ENCODE measurements at regions of chr2 and their contacts with region 1.

Region 1: DNA sequence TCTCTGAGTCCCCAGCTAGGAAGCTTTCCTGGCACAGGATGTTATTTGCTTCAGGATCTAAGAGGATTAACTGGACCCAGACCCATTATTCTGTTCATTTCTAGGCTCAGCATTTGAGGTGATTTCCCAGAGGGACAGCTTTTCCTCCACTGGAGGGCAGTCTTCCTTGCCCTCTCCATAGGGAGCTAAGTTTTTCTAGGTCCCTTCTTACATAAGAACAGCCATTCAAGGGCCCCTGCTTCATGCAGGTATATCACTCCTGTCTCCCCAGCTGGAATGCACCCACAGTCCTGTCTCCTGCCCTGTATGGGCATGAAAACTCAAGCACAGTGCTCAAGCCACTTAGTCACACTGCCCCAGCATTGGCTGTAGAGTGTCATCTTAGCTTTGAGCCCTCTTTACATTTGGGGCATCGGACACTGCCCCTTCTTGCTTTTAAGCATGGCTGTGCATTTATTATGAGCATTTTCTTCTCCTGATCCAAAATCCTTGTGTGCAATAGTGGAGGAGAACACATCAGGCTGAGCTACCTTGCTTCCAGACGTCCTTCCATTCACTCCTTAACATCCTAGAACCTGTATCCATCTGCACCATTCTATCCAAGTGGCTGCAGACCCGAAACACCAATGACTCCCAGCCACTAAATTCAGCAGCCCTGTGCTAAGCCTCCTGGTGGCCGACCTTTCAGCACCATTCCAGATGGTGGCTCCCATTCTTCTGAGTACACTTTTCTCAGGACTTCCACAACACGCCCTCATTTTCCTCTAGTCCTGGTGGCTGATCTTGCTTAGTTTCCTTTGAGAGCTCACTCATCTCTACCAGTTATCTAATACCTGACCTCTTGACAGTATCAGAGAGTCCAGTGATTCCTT is 80.0 kb downstream of the COPS8 start:
- DNase-seq: no peak
- ATAC-seq: no peak

Region 2: GRCh38 chr2:236968101-236968879 is 197.4 kb before region 1 on chr2:
- intact Hi-C with region 1: no loop called
- DNase-seq: no peak
- ATAC-seq: no peak

Region 3: DNA sequence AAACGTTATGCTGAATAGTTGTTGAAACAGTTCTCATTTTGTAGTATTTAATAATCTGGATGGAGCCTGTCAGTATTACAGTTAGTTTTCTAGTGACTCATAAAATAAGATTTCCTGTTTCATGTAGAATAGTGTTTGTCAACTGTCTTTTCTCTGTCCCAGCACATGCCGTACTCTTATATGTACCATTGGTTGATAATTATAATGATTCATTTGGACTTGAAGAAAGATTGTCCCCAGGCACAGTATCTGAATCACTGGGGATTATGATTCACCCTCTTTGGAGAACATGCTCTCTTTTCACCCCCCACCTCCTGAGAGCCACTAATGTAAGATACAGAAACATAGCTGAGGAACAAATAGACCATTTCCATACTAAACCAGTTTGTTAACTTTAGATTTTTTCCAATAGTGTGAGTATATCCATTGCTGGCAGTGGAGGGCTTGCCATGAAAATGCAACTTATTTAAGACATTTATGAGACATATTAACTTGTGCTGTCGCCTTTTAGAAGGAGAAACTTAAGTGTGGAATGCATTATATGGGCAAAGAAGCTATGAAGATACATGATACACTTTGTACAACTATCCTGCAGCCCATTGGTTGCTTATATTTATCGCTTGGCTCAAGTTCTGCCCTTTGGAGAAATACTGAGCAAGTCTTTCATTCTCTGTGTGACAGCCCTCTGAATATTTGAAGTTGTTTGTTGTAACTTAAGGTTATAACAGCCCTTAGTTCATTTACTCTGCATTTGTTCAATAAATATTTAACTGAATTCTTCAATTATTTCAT is 67.5 kb before region 1 on chr2:
- intact Hi-C with region 1: no loop called
- DNase-seq: no peak
- ATAC-seq: no peak

Region 4: GRCh38 chr2:237322564-237322963 is 156.9 kb after region 1 on chr2:
- intact Hi-C with region 1: loop called (anchors 2 kb)
- DNase-seq: no peak
- ATAC-seq: no peak

Region 5: GRCh38 chr2:237354892-237355291 is 189.3 kb after region 1 on chr2:
- intact Hi-C with region 1: no loop called
- DNase-seq: no peak
- ATAC-seq: peak; percentile 19

Region 6: DNA sequence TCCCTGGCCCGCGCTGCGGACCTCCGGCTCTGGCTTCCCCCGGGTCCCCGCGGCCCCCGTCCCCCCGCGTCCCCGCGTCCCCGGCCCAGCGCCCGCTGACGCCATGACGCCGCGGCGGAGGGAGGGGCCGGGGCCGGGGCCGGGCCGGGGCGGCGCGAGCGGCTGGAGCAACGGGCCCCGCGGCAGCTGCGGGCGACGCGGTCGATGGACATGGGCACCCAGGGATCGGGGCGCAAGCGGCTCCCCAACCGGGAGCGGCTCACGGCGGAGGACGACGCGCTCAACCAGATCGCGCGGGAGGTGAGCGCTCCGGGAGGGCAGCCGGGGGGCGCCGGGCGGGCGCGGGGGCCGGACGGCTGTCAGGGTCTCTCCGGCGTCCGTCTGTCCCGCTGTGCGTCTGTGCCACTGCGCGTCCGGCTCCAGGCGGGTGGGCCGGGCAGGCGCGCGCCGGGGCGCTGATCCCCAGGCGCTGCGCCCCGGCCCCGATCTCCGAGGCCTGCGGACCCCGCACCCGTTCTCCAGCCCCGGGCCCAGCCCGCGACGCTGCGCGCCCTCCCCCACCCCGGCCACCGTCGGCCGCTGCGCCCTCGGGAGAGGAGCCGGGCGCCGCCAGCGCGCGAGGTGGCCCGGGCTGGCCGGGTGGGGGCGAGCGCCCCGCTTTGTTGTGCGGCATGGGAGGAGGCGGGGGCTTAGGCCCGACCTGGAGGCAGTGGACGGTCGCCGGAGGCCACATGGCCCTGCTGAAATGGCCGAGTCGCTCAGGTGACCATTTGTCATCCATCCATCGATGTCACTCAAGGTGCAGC is 462.0 kb after region 1 on chr2 and contains the start of gene LRRFIP1:
- intact Hi-C with region 1: no loop called
- DNase-seq: no peak
- ATAC-seq: peak; percentile 72
- total RNA-seq, gene LRRFIP1: 104 TPM